ENCODE measurements at regions of chr1 and their contacts with region 1.

Region 1: GRCh38 chr1:206663832-206664652 is 20.7 kb upstream of the MAPKAPK2 start:
- DNase-seq: peak; percentile 50 to 77 (median 63)
- H3K4me3 ChIP-seq: no peak overlapping the region
- H3K4me3 Mint-ChIP-seq: peak overlapping the region in 1 of 7 donors; percentile 18
- H3K27ac ChIP-seq: no peak overlapping the region
- H3K27ac Mint-ChIP-seq: no peak overlapping the region
- H3K4me1 ChIP-seq: peaks cover 14% of the 10 kb centered on the region
- H3K4me1 Mint-ChIP-seq: peaks cover 14 to 20% (median 15%) of the 10 kb centered on the region in 3 donors
- H3K27me3 ChIP-seq: peaks cover 5% of the 10 kb centered on the region
- H3K27me3 Mint-ChIP-seq: peaks cover 15 to 30% of the 10 kb centered on the region in 2 donors

Region 2: GRCh38 chr1:206479183-206480125 is 184.6 kb before region 1 on chr1:
- CTCF ChIA-PET with region 1: interaction called, 12 read pairs
- POLR2A ChIA-PET with region 1: interaction called, 3 read pairs
- DNase-seq: peak; percentile 45 to 77 (median 52)
- H3K4me3 ChIP-seq: no peak overlapping the region
- H3K4me3 Mint-ChIP-seq: no peak overlapping the region
- H3K27ac ChIP-seq: no peak overlapping the region
- H3K27ac Mint-ChIP-seq: peak overlapping the region in 6 of 8 donors; percentile 8 to 72 (median 40)
- H3K4me1 ChIP-seq: no peaks in the 10 kb centered on the region
- H3K4me1 Mint-ChIP-seq: peaks cover 7 to 22% (median 10%) of the 10 kb centered on the region in 3 donors
- H3K27me3 ChIP-seq: no peaks in the 10 kb centered on the region
- H3K27me3 Mint-ChIP-seq: no peaks in the 10 kb centered on the region

Region 3: GRCh38 chr1:206635080-206635977 is 28.7 kb before region 1 on chr1 and contains the start of gene DYRK3:
- CTCF ChIA-PET with region 1: interaction called, 108 read pairs
- POLR2A ChIA-PET with region 1: interaction called, 5 read pairs
- DNase-seq: peak; percentile 84 to 94 (median 87)
- H3K4me3 ChIP-seq: peak within 1 kb of the TSS; percentile 62
- H3K4me3 Mint-ChIP-seq: peak within 1 kb of the TSS; percentile 85 to 96 (median 89)
- H3K27ac ChIP-seq: peak within 1 kb of the TSS; percentile 59
- H3K27ac Mint-ChIP-seq: peak within 1 kb of the TSS; percentile 61 to 95 (median 90)
- H3K4me1 ChIP-seq: peaks cover 13% of the 10 kb centered on the region
- H3K4me1 Mint-ChIP-seq: peaks cover 13 to 27% (median 18%) of the 10 kb centered on the region in 3 donors
- H3K27me3 ChIP-seq: no peaks in the 10 kb centered on the region
- H3K27me3 Mint-ChIP-seq: peaks cover 10 to 13% of the 10 kb centered on the region in 2 donors
- total RNA-seq, gene DYRK3: 11.0 to 11.7 TPM

Region 4: GRCh38 chr1:206674745-206675175 is 10.7 kb after region 1 on chr1:
- CTCF ChIA-PET with region 1: interaction called, 19 read pairs
- POLR2A ChIA-PET with region 1: no interaction called
- DNase-seq: no peak
- H3K4me3 ChIP-seq: no peak overlapping the region
- H3K4me3 Mint-ChIP-seq: no peak overlapping the region
- H3K27ac ChIP-seq: no peak overlapping the region
- H3K27ac Mint-ChIP-seq: no peak overlapping the region
- H3K4me1 ChIP-seq: peaks cover under 1% of the 10 kb centered on the region
- H3K4me1 Mint-ChIP-seq: peaks cover 0 to 9% (median 1%) of the 10 kb centered on the region in 3 donors
- H3K27me3 ChIP-seq: no peaks in the 10 kb centered on the region
- H3K27me3 Mint-ChIP-seq: peaks cover 4% of the 10 kb centered on the region in 2 donors

Region 5: GRCh38 chr1:206826405-206826804 is 162.4 kb after region 1 on chr1:
- CTCF ChIA-PET with region 1: no interaction called
- POLR2A ChIA-PET with region 1: no interaction called
- DNase-seq: no peak
- H3K4me3 ChIP-seq: no peak overlapping the region
- H3K4me3 Mint-ChIP-seq: no peak overlapping the region
- H3K27ac ChIP-seq: no peak overlapping the region
- H3K27ac Mint-ChIP-seq: peak overlapping the region in 2 of 8 donors; percentile 55 to 72
- H3K4me1 ChIP-seq: peaks cover 28% of the 10 kb centered on the region
- H3K4me1 Mint-ChIP-seq: peaks cover 37 to 44% (median 41%) of the 10 kb centered on the region in 3 donors
- H3K27me3 ChIP-seq: no peaks in the 10 kb centered on the region
- H3K27me3 Mint-ChIP-seq: no peaks in the 10 kb centered on the region

Measured in CD8-positive, alpha-beta memory T cell (primary cell).